ENCODE measurements at regions of chr12 and their contacts with region 1.

Region 1: GRCh38 chr12:41076114-41076513 is 112.0 kb upstream of the PDZRN4 start:
- DNase-seq: no peak
- H3K4me3 ChIP-seq: no peak overlapping the region
- H3K4me3 Mint-ChIP-seq: no peak overlapping the region
- H3K27ac ChIP-seq: no peak overlapping the region
- H3K27ac Mint-ChIP-seq: no peak overlapping the region
- H3K4me1 ChIP-seq: no peaks in the 10 kb centered on the region
- H3K4me1 Mint-ChIP-seq: no peaks in the 10 kb centered on the region
- H3K27me3 ChIP-seq: no peaks in the 10 kb centered on the region
- H3K27me3 Mint-ChIP-seq: no peaks in the 10 kb centered on the region

Region 2: GRCh38 chr12:41140117-41140516 is 64.0 kb after region 1 on chr12:
- CTCF ChIA-PET with region 1: no interaction called
- POLR2A ChIA-PET with region 1: no interaction called
- intact Hi-C with region 1: loop called (anchors 5 kb)
- DNase-seq: no peak
- H3K4me3 ChIP-seq: no peak overlapping the region
- H3K4me3 Mint-ChIP-seq: no peak overlapping the region
- H3K27ac ChIP-seq: no peak overlapping the region
- H3K27ac Mint-ChIP-seq: no peak overlapping the region
- H3K4me1 ChIP-seq: no peaks in the 10 kb centered on the region
- H3K4me1 Mint-ChIP-seq: no peaks in the 10 kb centered on the region
- H3K27me3 ChIP-seq: no peaks in the 10 kb centered on the region
- H3K27me3 Mint-ChIP-seq: no peaks in the 10 kb centered on the region